ENCODE measurements at regions of chr14 and their contacts with region 1.

Region 1: GRCh38 chr14:61342486-61342885 is 21.1 kb downstream of the PRKCH start:
- DNase-seq: peak; percentile 67
- ATAC-seq: peak; percentile 70
- H3K4me3 ChIP-seq: peak overlapping the region; percentile 57
- H3K27ac ChIP-seq: peak overlapping the region; percentile 74
- H3K4me1 ChIP-seq: peaks cover 63% of the 10 kb centered on the region
- H3K27me3 ChIP-seq: no peaks in the 10 kb centered on the region
- CTCF ChIP-seq: no peak
- EP300 ChIP-seq: peak; percentile 32 to 44; a peak in 1 of 4 replicates
- POLR2A ChIP-seq: no peak
- RAD21 ChIP-seq: no peak

Region 2: DNA sequence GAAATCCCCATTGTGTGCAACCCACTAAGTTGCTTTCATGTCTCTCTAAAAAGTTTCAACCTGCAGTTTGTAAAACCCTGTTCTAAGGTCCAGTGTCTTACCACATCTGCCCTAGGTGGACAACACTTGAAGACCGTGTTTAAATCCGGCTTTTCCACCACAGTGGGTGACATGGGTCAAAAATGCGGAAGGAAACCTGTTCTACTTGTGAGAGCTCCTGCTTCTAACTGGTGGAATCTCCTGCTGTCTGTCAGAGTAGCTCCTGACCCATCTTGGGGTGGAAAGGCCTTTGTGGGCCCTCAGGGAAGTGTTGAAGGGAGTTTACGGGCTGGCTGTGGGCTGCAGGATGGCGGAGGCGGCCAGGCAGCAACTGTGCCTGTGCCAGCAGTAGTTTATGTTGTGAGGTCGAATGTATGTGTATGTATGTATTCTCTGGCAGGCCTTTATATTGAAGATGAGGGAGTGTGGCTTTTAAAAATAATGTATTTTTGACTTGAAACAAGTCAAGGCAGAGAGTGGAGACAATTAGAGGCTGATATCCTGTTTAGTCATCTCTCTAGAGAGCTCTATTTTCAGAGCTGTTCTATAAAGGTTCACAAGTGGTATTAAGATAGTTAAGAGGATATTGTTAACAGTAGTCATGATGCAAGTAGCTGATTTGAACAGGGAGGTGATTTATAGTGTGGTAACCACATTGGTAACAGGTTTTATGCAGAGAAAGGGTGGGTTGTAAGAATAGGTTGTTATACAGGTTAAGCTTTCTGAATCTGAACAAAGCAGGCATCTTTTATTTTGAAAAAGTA is 45.9 kb after region 1 on chr14:
- CTCF ChIA-PET with region 1: interaction called, 3 read pairs
- POLR2A ChIA-PET with region 1: interaction called, 17 read pairs
- RAD21 ChIA-PET with region 1: interaction called, 25 read pairs
- SMC1A ChIA-PET with region 1: interaction called, 15 read pairs
- in situ Hi-C with region 1: no loop called
- intact Hi-C with region 1: loop called (anchors 5 kb)
- DNase-seq: peak; percentile 86
- ATAC-seq: peak; percentile 74
- H3K4me3 ChIP-seq: peak overlapping the region; percentile 24; the same call in 1 of the 2 replicates
- H3K27ac ChIP-seq: peak overlapping the region; percentile 99
- H3K4me1 ChIP-seq: peaks cover 76% of the 10 kb centered on the region
- H3K27me3 ChIP-seq: no peaks in the 10 kb centered on the region
- CTCF ChIP-seq: no peak
- EP300 ChIP-seq: peak; percentile 90 to 93
- POLR2A ChIP-seq: peak; percentile 63
- RAD21 ChIP-seq: no peak